Calu3 (cell line): ENCODE measurements at regions of chr6 and their contacts with region 1.

Region 1: GRCh38 chr6:132962936-132963868 is 148.8 kb downstream of the RPS12 start:
- DNase-seq: peak; percentile 89
- H3K4me3 Mint-ChIP-seq: no peak overlapping the region
- H3K27ac Mint-ChIP-seq: no peak overlapping the region
- H3K4me1 Mint-ChIP-seq: peaks cover 43% of the 10 kb centered on the region
- H3K27me3 Mint-ChIP-seq: peaks cover 6% of the 10 kb centered on the region
- CTCF ChIP-seq: peak; percentile 87

Region 2: DNA sequence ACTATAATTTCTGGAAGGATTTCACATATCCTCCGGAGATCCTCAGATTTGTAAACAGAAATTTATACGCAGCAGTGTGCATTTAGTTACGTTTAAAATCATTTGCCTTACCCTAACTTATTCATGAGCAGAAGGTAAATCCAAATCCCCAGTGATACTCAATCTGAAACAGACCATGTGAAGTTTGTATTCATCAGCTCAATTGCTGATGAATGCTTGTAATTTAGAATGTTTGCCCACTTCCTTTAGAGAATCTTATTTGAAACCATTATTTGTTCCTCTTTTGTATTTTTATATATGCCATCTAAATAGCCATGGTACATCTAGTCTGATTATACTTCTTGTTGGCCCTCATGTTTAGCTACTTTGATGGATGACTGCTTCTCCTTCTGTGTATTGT is 319.7 kb before region 1 on chr6:
- CTCF ChIA-PET with region 1: no interaction called
- intact Hi-C with region 1: no loop called
- DNase-seq: no peak
- H3K4me3 Mint-ChIP-seq: no peak overlapping the region
- H3K27ac Mint-ChIP-seq: no peak overlapping the region
- H3K4me1 Mint-ChIP-seq: no peaks in the 10 kb centered on the region
- H3K27me3 Mint-ChIP-seq: no peaks in the 10 kb centered on the region
- CTCF ChIP-seq: no peak

Region 3: GRCh38 chr6:132937466-132937906 is 25.7 kb before region 1 on chr6:
- CTCF ChIA-PET with region 1: interaction called, 6 read pairs
- intact Hi-C with region 1: loop called (anchors 2 kb)
- DNase-seq: peak; percentile 80
- H3K4me3 Mint-ChIP-seq: peak overlapping the region; percentile 48
- H3K27ac Mint-ChIP-seq: no peak overlapping the region
- H3K4me1 Mint-ChIP-seq: peaks cover 8% of the 10 kb centered on the region
- H3K27me3 Mint-ChIP-seq: no peaks in the 10 kb centered on the region
- CTCF ChIP-seq: peak; percentile 58

Region 4: DNA sequence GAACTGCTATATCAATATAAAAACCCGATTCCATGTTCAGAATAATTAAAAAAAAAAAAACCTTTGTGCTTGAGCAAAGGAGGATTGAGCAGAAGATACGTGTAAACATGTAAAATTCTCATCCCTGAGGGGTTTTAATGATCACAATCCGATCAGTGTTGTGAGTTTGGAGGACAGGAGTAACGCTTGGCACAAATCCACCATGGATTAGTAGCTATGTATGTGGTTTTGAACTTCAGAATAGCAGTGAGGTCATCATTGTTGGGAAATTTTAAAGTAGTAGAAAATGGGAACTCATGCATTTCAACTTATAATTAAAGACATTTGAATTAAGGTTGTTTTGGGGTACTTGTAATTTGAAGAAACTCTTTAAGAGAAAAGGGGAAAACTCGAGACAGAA is 54.4 kb after region 1 on chr6:
- CTCF ChIA-PET with region 1: no interaction called
- intact Hi-C with region 1: no loop called
- DNase-seq: no peak
- H3K4me3 Mint-ChIP-seq: no peak overlapping the region
- H3K27ac Mint-ChIP-seq: no peak overlapping the region
- H3K4me1 Mint-ChIP-seq: peaks cover 15% of the 10 kb centered on the region
- H3K27me3 Mint-ChIP-seq: no peaks in the 10 kb centered on the region
- CTCF ChIP-seq: no peak

Region 5: GRCh38 chr6:133099573-133099972 is 136.4 kb after region 1 on chr6:
- CTCF ChIA-PET with region 1: interaction called, 5 read pairs
- intact Hi-C with region 1: loop called (anchors 2 kb)
- DNase-seq: peak; percentile 18
- H3K4me3 Mint-ChIP-seq: peak overlapping the region; percentile 46
- H3K27ac Mint-ChIP-seq: peak overlapping the region; percentile 85
- H3K4me1 Mint-ChIP-seq: peaks cover 47% of the 10 kb centered on the region
- H3K27me3 Mint-ChIP-seq: no peaks in the 10 kb centered on the region
- CTCF ChIP-seq: no peak

Region 6: DNA sequence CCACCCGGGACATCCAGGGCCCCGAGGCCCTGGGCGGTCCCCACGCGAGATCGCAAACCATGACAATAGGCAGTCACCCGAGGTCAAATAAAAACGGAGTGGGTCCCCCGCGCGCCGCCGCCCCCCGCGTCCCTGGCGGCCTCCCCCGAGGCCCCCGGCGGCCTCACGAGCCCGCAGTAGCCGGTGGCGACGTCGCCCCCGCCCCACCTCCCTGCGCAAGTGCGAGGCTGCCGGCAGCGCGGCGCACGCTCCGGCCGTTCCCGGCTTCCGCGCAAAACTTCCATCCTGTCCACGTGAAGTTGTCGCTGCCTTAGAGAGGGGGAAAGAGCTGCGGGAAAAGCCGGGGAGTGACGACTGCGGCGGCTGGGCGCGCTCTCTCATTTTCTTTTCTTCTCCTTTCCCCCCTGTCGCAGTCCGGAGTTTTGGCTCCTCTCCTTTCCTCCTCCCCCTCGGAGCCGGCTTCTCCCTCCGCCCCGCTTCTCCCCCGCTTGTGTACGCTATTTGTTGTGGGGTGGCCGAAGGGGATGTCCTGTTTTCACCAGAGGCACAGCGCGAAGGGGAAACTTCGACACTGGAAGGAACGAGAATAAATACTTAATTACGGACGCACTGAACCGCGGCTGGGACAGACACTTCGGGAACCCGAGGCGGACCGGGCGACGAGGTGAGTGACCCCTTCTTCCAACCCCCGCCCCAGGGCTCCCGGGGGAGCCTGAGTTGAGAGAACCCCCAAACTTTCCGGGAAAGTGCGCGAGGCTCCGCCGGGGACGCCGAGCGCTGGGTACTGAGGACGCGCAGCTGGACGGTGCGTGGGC is 278.1 kb after region 1 on chr6 and contains the start of gene EYA4:
- CTCF ChIA-PET with region 1: interaction called, 3 read pairs
- intact Hi-C with region 1: loop called (anchors 5 kb)
- DNase-seq: peak; percentile 69
- H3K4me3 Mint-ChIP-seq: peak within 1 kb of the TSS; percentile 67
- H3K27ac Mint-ChIP-seq: peak within 1 kb of the TSS; percentile 81
- H3K4me1 Mint-ChIP-seq: peaks cover 6% of the 10 kb centered on the region
- H3K27me3 Mint-ChIP-seq: no peaks in the 10 kb centered on the region
- CTCF ChIP-seq: peak; percentile 12
- total RNA-seq, gene EYA4: 38.8 and 55.1 TPM in 2 replicates

Region 7: GRCh38 chr6:133553652-133554051 is 590.5 kb after region 1 on chr6:
- CTCF ChIA-PET with region 1: interaction called, 5 read pairs
- intact Hi-C with region 1: loop called (anchors 2 kb)
- DNase-seq: peak; percentile 60
- H3K4me3 Mint-ChIP-seq: no peak overlapping the region
- H3K27ac Mint-ChIP-seq: no peak overlapping the region
- H3K4me1 Mint-ChIP-seq: peaks cover 33% of the 10 kb centered on the region
- H3K27me3 Mint-ChIP-seq: no peaks in the 10 kb centered on the region
- CTCF ChIP-seq: no peak